ENCODE measurements at regions of chr11 and their contacts with region 1.

Region 1: GRCh38 chr11:113289431-113290187 is 24.8 kb upstream of the TTC12 start:
- DNase-seq: peak; percentile 70
- H3K4me3 Mint-ChIP-seq: no peak overlapping the region
- H3K27ac Mint-ChIP-seq: no peak overlapping the region
- H3K4me1 Mint-ChIP-seq: no peaks in the 10 kb centered on the region
- H3K27me3 Mint-ChIP-seq: no peaks in the 10 kb centered on the region

Region 2: DNA sequence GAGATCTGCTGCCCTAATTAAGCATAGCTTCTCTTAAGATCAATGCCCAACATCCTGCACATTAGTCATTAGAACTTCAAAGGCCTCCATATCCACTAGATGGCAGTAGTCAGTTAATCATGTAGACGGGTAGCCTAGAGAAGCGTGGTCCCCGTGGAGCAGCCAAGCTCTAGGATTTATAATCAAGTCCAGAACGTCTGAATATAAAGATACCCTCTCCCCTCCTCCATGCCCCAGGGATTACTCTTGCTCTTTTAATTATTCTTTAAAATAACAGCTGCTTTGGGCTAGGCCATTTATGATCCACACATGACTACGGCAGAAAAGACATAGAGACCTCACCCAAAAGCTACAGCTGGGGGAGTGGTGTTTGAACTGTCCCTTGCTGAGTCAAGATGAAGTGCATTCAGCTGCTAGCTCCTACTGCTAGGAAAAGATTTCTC is 701.3 kb before region 1 on chr11:
- CTCF ChIA-PET with region 1: interaction called, 60 read pairs
- DNase-seq: peak; percentile 44
- H3K4me3 Mint-ChIP-seq: no peak overlapping the region
- H3K27ac Mint-ChIP-seq: peak overlapping the region; percentile 17
- H3K4me1 Mint-ChIP-seq: no peaks in the 10 kb centered on the region
- H3K27me3 Mint-ChIP-seq: peaks cover 11% of the 10 kb centered on the region

Region 3: GRCh38 chr11:112795142-112795815 is 494.3 kb before region 1 on chr11:
- CTCF ChIA-PET with region 1: interaction called, 21 read pairs
- DNase-seq: peak; percentile 51
- H3K4me3 Mint-ChIP-seq: no peak overlapping the region
- H3K27ac Mint-ChIP-seq: no peak overlapping the region
- H3K4me1 Mint-ChIP-seq: peaks cover 8% of the 10 kb centered on the region
- H3K27me3 Mint-ChIP-seq: peaks cover 3% of the 10 kb centered on the region

Measured in activated naive CD4-positive, alpha-beta T cell treated with anti-CD3 and anti-CD28 coated beads, Interleukin-2, amount 10 ng/mL, durations not matched to agents 7 days and 5 days (primary cell).